AG04450 (cell line): ENCODE measurements at regions of chr10 and their contacts with region 1.

Region 1: GRCh38 chr10:931416-932318 is at the start of gene LARP4B:
- DNase-seq: peak; percentile 94
- H3K4me3 ChIP-seq: peak within 1 kb of the TSS; percentile 85
- H3K27ac ChIP-seq: peak within 1 kb of the TSS; percentile 68
- H3K27me3 ChIP-seq: no peaks in the 10 kb centered on the region
- CTCF ChIP-seq: no peak
- polyA plus RNA-seq, gene LARP4B: 33.5 and 34.0 TPM in 2 replicates

Region 2: GRCh38 chr10:784403-785088 is 147.1 kb before region 1 on chr10:
- CTCF ChIA-PET with region 1: no interaction called
- POLR2A ChIA-PET with region 1: no interaction called
- DNase-seq: peak; percentile 42
- H3K4me3 ChIP-seq: peak overlapping the region; percentile 53
- H3K27ac ChIP-seq: peak overlapping the region; percentile 47
- H3K27me3 ChIP-seq: no peaks in the 10 kb centered on the region
- CTCF ChIP-seq: peak; percentile 39

Region 3: GRCh38 chr10:909831-910230 is 21.8 kb before region 1 on chr10:
- CTCF ChIA-PET with region 1: no interaction called
- POLR2A ChIA-PET with region 1: interaction called, 13 read pairs
- DNase-seq: no peak
- H3K4me3 ChIP-seq: no peak overlapping the region
- H3K27ac ChIP-seq: no peak overlapping the region
- H3K27me3 ChIP-seq: no peaks in the 10 kb centered on the region
- CTCF ChIP-seq: no peak

Region 4: GRCh38 chr10:987870-988666 is 56.4 kb after region 1 on chr10 and contains the start of gene GTPBP4:
- CTCF ChIA-PET with region 1: no interaction called
- POLR2A ChIA-PET with region 1: interaction called, 11 read pairs
- DNase-seq: peak; percentile 89
- H3K4me3 ChIP-seq: peak within 1 kb of the TSS; percentile 90
- H3K27ac ChIP-seq: peak within 1 kb of the TSS; percentile 98
- H3K27me3 ChIP-seq: no peaks in the 10 kb centered on the region
- CTCF ChIP-seq: no peak
- polyA plus RNA-seq, gene GTPBP4: 33.4 and 34.9 TPM in 2 replicates